ENCODE measurements at regions of chr6 and their contacts with region 1.

Region 1: GRCh38 chr6:40148882-40149573 is 214.8 kb upstream of the MOCS1 start:
- DNase-seq: no peak
- H3K4me3 ChIP-seq: no peak overlapping the region
- H3K27ac ChIP-seq: no peak overlapping the region
- H3K4me1 ChIP-seq: no peaks in the 10 kb centered on the region
- H3K27me3 ChIP-seq: peaks cover 10% of the 10 kb centered on the region; the same call in 1 of the 2 replicates
- CTCF ChIP-seq: no peak

Region 2: GRCh38 chr6:39553860-39554802 is 594.9 kb before region 1 on chr6:
- CTCF ChIA-PET with region 1: no interaction called
- POLR2A ChIA-PET with region 1: no interaction called
- intact Hi-C with region 1: loop called (anchors 5 kb)
- DNase-seq: no peak
- H3K4me3 ChIP-seq: no peak overlapping the region
- H3K27ac ChIP-seq: no peak overlapping the region
- H3K4me1 ChIP-seq: no peaks in the 10 kb centered on the region
- H3K27me3 ChIP-seq: peaks cover 47% of the 10 kb centered on the region
- CTCF ChIP-seq: no peak

Region 3: DNA sequence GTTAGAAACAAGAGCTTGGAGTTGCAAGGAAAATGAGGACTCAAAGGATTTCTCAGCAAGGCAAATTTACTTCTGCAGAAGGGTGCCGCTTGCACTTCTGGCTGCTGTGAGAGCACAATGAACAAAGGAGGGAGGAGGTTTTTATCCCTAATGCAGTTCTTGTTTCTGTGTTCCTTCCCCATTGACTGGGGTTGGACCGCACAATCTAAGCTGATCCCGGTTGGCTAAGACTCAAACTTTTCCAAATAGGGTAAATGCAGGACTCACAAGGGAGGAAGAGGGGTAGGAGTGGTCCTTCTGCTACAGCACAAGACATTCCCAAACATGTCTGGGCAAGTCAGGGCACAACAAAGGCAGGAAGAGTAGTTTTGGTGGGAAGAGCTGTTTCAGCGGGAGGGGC is 34.9 kb after region 1 on chr6:
- CTCF ChIA-PET with region 1: no interaction called
- POLR2A ChIA-PET with region 1: no interaction called
- intact Hi-C with region 1: loop called (anchors 2 kb)
- DNase-seq: no peak
- H3K4me3 ChIP-seq: no peak overlapping the region
- H3K27ac ChIP-seq: no peak overlapping the region
- H3K4me1 ChIP-seq: no peaks in the 10 kb centered on the region
- H3K27me3 ChIP-seq: no peaks in the 10 kb centered on the region
- CTCF ChIP-seq: no peak

Measured in PC-9 (cell line).